Mammary epithelial cell (primary cell): ENCODE measurements at regions of chr18 and their contacts with region 1.

Region 1: DNA sequence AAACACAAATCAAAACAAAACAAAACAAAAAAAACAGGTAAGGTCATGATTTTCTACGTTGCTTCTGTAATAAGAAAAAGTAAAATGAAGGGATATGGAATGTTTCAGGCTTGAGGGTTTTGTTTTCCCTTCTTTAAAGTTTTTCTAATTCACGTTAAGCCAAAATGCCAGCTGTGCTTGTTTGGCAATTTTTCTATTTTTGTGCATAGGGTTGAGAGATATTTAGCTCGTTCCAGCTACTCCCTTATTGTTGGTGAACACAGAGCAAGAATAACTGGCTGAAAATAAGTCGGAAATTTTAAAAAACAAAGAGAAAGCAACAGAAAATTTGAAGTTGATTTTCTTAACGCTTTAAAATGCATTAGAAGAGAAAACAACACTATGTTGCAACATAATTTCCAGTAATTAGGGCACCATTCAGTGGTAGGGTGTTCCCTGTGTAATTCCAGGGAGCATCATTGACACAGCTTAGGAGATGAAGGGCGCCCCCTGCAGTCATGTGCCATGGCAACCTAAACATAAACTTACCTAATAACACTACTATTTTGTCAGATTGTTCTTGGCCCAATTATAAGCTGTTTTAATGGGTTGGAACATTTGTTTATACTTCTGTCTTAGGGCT is 99.5 kb downstream of the DTNA start:
- DNase-seq: peak; percentile 35
- H3K4me3 ChIP-seq: no peak overlapping the region
- H3K27ac ChIP-seq: no peak overlapping the region
- H3K4me1 ChIP-seq: peaks cover 14% of the 10 kb centered on the region
- H3K27me3 ChIP-seq: no peaks in the 10 kb centered on the region
- CTCF ChIP-seq: peak; percentile 51 to 62

Region 2: GRCh38 chr18:34493099-34493544 is 316.4 kb before region 1 on chr18:
- CTCF ChIA-PET with region 1: no interaction called
- dilution Hi-C with region 1: no loop called
- in situ Hi-C with region 1: no loop called
- intact Hi-C with region 1: loop called (anchors 10 kb)
- DNase-seq: peak; percentile 86
- H3K4me3 ChIP-seq: peak overlapping the region; percentile 45 to 63 (median 46)
- H3K27ac ChIP-seq: peak overlapping the region; percentile 15
- H3K4me1 ChIP-seq: no peaks in the 10 kb centered on the region
- H3K27me3 ChIP-seq: peaks cover 5% of the 10 kb centered on the region
- CTCF ChIP-seq: no peak

Region 3: GRCh38 chr18:34729264-34729663 is 80.3 kb before region 1 on chr18:
- CTCF ChIA-PET with region 1: no interaction called
- dilution Hi-C with region 1: no loop called
- in situ Hi-C with region 1: no loop called
- intact Hi-C with region 1: loop called (anchors 5 kb)
- DNase-seq: peak; percentile 40
- H3K4me3 ChIP-seq: no peak overlapping the region
- H3K27ac ChIP-seq: no peak overlapping the region
- H3K4me1 ChIP-seq: no peaks in the 10 kb centered on the region
- H3K27me3 ChIP-seq: no peaks in the 10 kb centered on the region
- CTCF ChIP-seq: peak; percentile 72 to 85

Region 4: DNA sequence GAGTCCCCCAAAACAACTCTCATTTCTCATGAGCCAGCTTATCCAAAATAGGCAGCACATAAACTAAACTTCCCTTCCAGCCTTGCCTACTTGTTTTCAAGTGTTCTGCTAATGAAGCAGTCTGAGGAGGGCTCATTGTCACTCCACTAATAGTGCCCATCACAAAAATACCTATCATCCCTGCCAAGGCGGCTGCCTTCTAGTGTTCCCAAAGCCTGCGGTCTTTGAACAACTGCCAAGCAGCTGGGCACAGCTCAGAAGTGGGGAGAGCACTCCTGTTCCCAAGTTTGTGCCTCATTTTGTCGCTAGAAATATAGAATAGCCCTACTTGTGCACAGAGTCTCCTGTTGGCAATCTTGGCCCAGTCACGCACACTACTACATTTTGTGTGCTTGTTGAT is 49.1 kb before region 1 on chr18:
- CTCF ChIA-PET with region 1: no interaction called
- dilution Hi-C with region 1: no loop called
- in situ Hi-C with region 1: no loop called
- intact Hi-C with region 1: no loop called
- DNase-seq: no peak
- H3K4me3 ChIP-seq: no peak overlapping the region
- H3K27ac ChIP-seq: no peak overlapping the region
- H3K4me1 ChIP-seq: no peaks in the 10 kb centered on the region
- H3K27me3 ChIP-seq: no peaks in the 10 kb centered on the region
- CTCF ChIP-seq: no peak

Region 5: GRCh38 chr18:35573531-35573930 is 764.0 kb after region 1 on chr18:
- CTCF ChIA-PET with region 1: interaction called, 27 read pairs
- dilution Hi-C with region 1: no loop called
- in situ Hi-C with region 1: no loop called
- intact Hi-C with region 1: no loop called
- DNase-seq: no peak
- H3K4me3 ChIP-seq: no peak overlapping the region
- H3K27ac ChIP-seq: no peak overlapping the region
- H3K4me1 ChIP-seq: no peaks in the 10 kb centered on the region
- H3K27me3 ChIP-seq: no peaks in the 10 kb centered on the region
- CTCF ChIP-seq: no peak